Natural killer cell (primary cell): ENCODE measurements at regions of chr1 and their contacts with region 1.

Region 1: DNA sequence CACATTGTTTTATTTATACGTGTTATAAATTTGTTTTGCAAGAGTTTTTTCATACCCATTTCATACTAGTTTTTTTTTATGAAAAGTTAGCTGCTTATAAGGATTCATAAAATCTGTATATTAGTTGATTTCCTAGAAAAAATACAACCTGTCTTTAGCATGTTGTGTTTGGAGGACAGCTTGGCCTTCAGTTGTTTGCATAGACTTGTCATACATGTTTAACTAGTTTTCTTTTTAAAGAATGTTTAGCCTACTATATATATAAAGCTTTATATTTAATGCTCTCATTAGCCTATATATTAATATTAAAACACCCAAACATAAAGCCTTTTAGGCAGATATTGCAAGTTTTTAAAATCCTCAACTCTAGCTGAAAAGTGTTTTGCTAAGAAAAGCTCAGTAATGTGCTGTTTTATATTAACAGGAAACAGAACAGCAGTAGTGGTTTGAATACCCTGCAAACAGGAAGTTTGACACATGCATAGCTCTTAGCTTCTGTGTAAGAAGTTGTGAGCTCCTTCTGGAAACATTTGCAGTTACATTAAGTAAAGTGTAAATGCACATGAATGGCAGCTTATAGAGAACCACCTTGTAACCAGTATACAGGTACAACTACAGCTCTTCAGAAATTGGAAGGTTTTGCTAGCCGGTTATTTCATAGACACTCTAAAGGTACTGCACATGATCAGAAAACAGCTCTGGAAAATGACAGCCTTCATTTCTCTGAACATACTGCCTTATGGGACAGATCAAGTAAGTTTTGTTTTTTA is at the start of gene PRKACB:
- DNase-seq: peak in 1 of 2 donors; percentile 78
- ATAC-seq: peak; percentile 86 to 91 (median 91)
- H3K4me3 ChIP-seq: peak within 1 kb of the TSS; percentile 54
- H3K4me3 Mint-ChIP-seq: peak within 1 kb of the TSS; percentile 98
- H3K27ac ChIP-seq: peak within 1 kb of the TSS; percentile 93
- H3K27ac Mint-ChIP-seq: peak within 1 kb of the TSS; percentile 96 to 97
- H3K4me1 ChIP-seq: peaks cover 5% of the 10 kb centered on the region
- H3K4me1 Mint-ChIP-seq: peaks cover 45 to 47% of the 10 kb centered on the region in 2 donors
- H3K27me3 ChIP-seq: no peaks in the 10 kb centered on the region
- H3K27me3 Mint-ChIP-seq: no peaks in the 10 kb centered on the region
- CTCF ChIP-seq: no peak
- total RNA-seq, gene PRKACB: 111 to 148 (median 140) TPM

Region 2: GRCh38 chr1:84181350-84182005 is 37.5 kb after region 1 on chr1:
- intact Hi-C with region 1: loop called (anchors 5 kb)
- DNase-seq: no peak
- ATAC-seq: no peak
- H3K4me3 ChIP-seq: no peak overlapping the region
- H3K4me3 Mint-ChIP-seq: no peak overlapping the region
- H3K27ac ChIP-seq: no peak overlapping the region
- H3K27ac Mint-ChIP-seq: peak overlapping the region; percentile 68 to 70
- H3K4me1 ChIP-seq: no peaks in the 10 kb centered on the region
- H3K4me1 Mint-ChIP-seq: peaks cover 0 to 8% of the 10 kb centered on the region in 2 donors
- H3K27me3 ChIP-seq: no peaks in the 10 kb centered on the region
- H3K27me3 Mint-ChIP-seq: no peaks in the 10 kb centered on the region
- CTCF ChIP-seq: no peak

Region 3: DNA sequence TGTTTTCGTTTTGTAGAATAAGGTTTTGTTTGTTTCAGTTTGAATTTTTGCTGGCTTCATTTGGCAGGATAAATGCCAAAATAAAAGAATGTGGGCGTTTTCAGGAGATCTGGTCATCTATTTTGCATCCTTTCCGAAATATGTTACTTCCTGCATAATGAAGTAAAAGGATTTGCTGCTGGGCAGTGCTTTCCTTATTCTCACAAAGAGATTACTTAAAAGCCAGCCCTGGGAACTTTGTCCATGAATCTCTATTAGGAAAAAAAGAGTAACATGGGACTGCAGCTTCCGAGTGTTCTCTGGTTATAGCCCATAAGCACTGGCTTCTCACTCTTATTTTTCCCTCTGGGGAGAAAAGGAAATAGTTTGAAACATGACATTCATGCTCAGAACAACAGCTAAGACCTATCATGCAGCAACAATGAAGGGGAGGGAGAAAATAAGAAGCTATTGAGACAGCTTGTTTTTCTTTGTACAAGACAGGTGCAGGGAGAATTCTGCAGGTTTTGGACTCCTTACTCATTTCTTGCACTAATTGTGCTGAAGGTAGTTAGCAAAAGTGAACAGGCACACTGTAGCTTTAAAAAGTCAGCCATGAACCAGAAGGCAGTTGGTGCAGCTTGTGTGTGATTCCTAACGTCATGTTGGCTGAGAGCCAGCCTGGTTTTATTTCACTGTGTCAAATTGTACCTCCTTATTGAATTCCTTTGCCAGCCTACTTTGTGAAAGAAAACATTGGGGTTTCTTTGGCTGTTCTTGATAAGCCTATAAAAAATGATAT is 157.2 kb after region 1 on chr1 and contains the start of gene SAMD13:
- intact Hi-C with region 1: loop called (anchors 2 kb)
- DNase-seq: peak in 1 of 2 donors; percentile 82
- ATAC-seq: no peak
- H3K4me3 ChIP-seq: peak within 1 kb of the TSS; percentile 10
- H3K4me3 Mint-ChIP-seq: peak within 1 kb of the TSS; percentile 71
- H3K27ac ChIP-seq: no peak within 1 kb of the TSS
- H3K27ac Mint-ChIP-seq: peak within 1 kb of the TSS; percentile 10 to 80
- H3K4me1 ChIP-seq: peaks cover 7% of the 10 kb centered on the region
- H3K4me1 Mint-ChIP-seq: peaks cover 28 to 45% of the 10 kb centered on the region in 2 donors
- H3K27me3 ChIP-seq: peaks cover 2% of the 10 kb centered on the region
- H3K27me3 Mint-ChIP-seq: peaks cover 2 to 8% of the 10 kb centered on the region in 2 donors
- CTCF ChIP-seq: no peak
- total RNA-seq, gene SAMD13: 0.40 TPM in 1 of 3 donors, not detected in the others

Region 4: GRCh38 chr1:84387480-84388163 is 243.6 kb after region 1 on chr1:
- intact Hi-C with region 1: no loop called
- DNase-seq: peak in 1 of 2 donors; percentile 18
- ATAC-seq: peak in 2 of 3 donors; percentile 44 to 46
- H3K4me3 ChIP-seq: no peak overlapping the region
- H3K4me3 Mint-ChIP-seq: no peak overlapping the region
- H3K27ac ChIP-seq: no peak overlapping the region
- H3K27ac Mint-ChIP-seq: no peak overlapping the region
- H3K4me1 ChIP-seq: no peaks in the 10 kb centered on the region
- H3K4me1 Mint-ChIP-seq: no peaks in the 10 kb centered on the region
- H3K27me3 ChIP-seq: no peaks in the 10 kb centered on the region
- H3K27me3 Mint-ChIP-seq: peaks cover 0 to 5% of the 10 kb centered on the region in 2 donors
- CTCF ChIP-seq: no peak

Region 5: DNA sequence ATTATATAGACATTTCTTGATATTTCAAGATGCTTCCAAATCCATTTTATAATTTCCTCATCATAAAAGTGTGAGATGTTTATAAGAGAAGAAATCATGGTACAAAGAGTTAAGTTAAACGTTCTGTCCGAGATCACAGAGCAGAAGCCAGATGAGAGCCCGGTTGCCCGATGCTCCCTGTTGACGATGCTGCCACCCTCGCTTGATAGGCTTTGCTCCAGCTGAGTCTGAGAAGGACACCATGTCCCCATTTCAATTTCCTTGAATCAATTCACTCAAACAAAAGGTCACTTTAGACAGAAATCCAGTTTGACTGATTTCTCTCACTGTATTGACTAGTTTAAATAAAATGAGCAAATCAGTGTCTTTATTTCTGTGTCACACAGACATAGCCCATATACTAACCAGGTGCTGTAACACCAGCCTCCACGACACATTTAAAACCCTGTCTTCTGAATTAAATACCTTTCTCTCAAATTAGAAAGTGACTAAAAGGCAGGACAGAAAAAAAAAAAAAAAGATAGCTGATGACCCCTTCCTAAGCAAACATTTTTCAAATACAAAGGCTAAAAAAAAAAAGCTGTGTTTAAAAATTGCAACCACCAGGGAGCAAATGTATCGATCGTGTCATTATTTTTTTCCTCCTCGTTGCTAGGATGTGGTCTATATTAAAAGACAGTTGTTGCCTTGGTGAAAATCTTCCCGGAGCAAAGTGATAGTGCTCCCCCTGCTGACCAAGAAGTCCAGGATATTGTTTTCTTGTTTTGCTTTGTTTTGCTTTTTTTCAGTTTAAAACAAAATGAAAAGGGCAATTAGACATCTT is 289.5 kb after region 1 on chr1:
- intact Hi-C with region 1: loop called (anchors 1 kb)
- DNase-seq: peak; percentile 21 to 92
- ATAC-seq: peak; percentile 71 to 85 (median 84)
- H3K4me3 ChIP-seq: peak overlapping the region; percentile 2
- H3K4me3 Mint-ChIP-seq: peak overlapping the region; percentile 72
- H3K27ac ChIP-seq: peak overlapping the region; percentile 69
- H3K27ac Mint-ChIP-seq: no peak overlapping the region
- H3K4me1 ChIP-seq: peaks cover 27% of the 10 kb centered on the region
- H3K4me1 Mint-ChIP-seq: peaks cover 4 to 8% of the 10 kb centered on the region in 2 donors
- H3K27me3 ChIP-seq: no peaks in the 10 kb centered on the region
- H3K27me3 Mint-ChIP-seq: no peaks in the 10 kb centered on the region
- CTCF ChIP-seq: peak; percentile 70

Region 6: GRCh38 chr1:84573967-84574842 is 430.2 kb after region 1 on chr1 and contains the start of gene CTBS:
- intact Hi-C with region 1: loop called (anchors 5 kb)
- DNase-seq: peak; percentile 80 to 94
- ATAC-seq: peak; percentile 95 to 99 (median 97)
- H3K4me3 ChIP-seq: peak within 1 kb of the TSS; percentile 72
- H3K4me3 Mint-ChIP-seq: peak within 1 kb of the TSS; percentile 93
- H3K27ac ChIP-seq: peak within 1 kb of the TSS; percentile 93
- H3K27ac Mint-ChIP-seq: peak within 1 kb of the TSS; percentile 98 to 99
- H3K4me1 ChIP-seq: peaks cover 16% of the 10 kb centered on the region
- H3K4me1 Mint-ChIP-seq: peaks cover 41 to 44% of the 10 kb centered on the region in 2 donors
- H3K27me3 ChIP-seq: no peaks in the 10 kb centered on the region
- H3K27me3 Mint-ChIP-seq: no peaks in the 10 kb centered on the region
- CTCF ChIP-seq: no peak
- total RNA-seq, gene CTBS: 14.4 to 19.9 (median 17.1) TPM

Region 7: DNA sequence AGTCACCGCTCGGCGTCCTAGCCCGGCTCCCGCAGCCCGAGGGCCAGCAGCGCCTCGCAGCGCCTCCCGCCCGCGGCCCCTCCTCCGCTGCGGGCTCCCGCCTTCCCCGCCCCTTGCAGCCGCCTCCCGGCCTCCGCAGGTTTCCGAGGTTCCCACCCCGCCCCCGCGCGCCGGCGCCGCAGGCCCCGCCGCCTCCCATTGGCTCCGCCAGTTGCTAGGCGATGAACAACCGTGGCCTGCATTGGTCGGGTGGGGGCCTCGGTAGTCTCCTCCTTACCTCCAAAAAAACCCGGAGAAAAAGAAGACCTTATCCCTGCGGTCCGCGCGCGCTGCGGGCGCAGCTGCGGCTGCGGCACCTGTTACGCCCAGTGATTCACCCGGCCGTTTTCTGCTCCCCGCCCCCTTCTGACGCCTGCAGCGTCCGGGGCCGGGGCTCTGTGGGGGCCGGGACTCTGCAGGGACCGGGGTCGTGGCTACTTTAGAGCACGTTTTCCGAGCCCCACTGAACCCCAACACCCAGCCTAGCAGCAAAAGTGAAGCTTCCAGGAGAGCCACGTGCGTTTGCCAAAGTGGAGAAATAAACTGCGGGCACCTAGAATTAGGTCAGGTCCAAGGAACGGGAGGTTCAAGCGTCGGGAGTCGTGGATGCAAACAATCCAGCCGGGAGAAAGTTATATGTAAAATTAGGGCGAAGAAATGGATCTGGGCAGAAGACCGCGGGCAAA is 546.6 kb after region 1 on chr1 and contains the start of gene SSX2IP:
- intact Hi-C with region 1: loop called (anchors 5 kb)
- DNase-seq: peak; percentile 98 to 99
- ATAC-seq: peak; percentile 75 to 94 (median 87)
- H3K4me3 ChIP-seq: peak within 1 kb of the TSS; percentile 60
- H3K4me3 Mint-ChIP-seq: peak within 1 kb of the TSS; percentile 97
- H3K27ac ChIP-seq: peak within 1 kb of the TSS; percentile 85
- H3K27ac Mint-ChIP-seq: peak within 1 kb of the TSS; percentile 99
- H3K4me1 ChIP-seq: peaks cover 23% of the 10 kb centered on the region
- H3K4me1 Mint-ChIP-seq: peaks cover 62 to 67% of the 10 kb centered on the region in 2 donors
- H3K27me3 ChIP-seq: no peaks in the 10 kb centered on the region
- H3K27me3 Mint-ChIP-seq: no peaks in the 10 kb centered on the region
- CTCF ChIP-seq: no peak
- total RNA-seq, gene SSX2IP: 24.2 to 35.8 (median 27.2) TPM

Region 8: DNA sequence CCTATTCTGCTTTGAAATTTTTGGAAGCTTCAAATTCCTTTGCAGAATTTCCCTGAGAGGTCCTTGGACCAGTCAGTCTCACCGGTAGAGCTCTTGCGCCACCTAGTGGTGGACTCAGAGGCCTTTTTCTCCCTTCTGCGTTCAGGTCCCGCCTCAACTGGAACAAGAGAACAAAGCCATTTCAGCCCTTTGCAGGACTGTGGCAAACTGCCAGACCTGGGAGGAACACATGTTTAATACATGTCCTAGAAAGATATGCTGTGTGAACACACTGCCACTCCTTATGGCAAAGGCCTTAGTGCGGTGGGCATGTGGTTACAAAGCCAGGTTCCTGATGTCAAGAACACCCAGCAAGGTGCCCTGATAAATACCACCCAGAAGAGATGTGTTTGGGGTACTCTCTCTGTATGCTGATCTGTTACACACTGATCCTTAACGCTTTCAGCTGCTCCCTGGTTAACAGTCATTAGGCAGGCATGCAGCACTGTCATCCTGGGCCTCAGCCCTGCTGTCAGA is 628.5 kb after region 1 on chr1:
- intact Hi-C with region 1: loop called (anchors 1 kb)
- DNase-seq: peak; percentile 68 to 84
- ATAC-seq: peak; percentile 65 to 83 (median 82)
- H3K4me3 ChIP-seq: no peak overlapping the region
- H3K4me3 Mint-ChIP-seq: no peak overlapping the region
- H3K27ac ChIP-seq: no peak overlapping the region
- H3K27ac Mint-ChIP-seq: no peak overlapping the region
- H3K4me1 ChIP-seq: no peaks in the 10 kb centered on the region
- H3K4me1 Mint-ChIP-seq: no peaks in the 10 kb centered on the region
- H3K27me3 ChIP-seq: no peaks in the 10 kb centered on the region
- H3K27me3 Mint-ChIP-seq: peaks cover 11 to 15% of the 10 kb centered on the region in 2 donors
- CTCF ChIP-seq: peak; percentile 98